Heart right ventricle (tissue), 16 donors: ENCODE measurements at regions of chr3 and their contacts with region 1.

Region 1: DNA sequence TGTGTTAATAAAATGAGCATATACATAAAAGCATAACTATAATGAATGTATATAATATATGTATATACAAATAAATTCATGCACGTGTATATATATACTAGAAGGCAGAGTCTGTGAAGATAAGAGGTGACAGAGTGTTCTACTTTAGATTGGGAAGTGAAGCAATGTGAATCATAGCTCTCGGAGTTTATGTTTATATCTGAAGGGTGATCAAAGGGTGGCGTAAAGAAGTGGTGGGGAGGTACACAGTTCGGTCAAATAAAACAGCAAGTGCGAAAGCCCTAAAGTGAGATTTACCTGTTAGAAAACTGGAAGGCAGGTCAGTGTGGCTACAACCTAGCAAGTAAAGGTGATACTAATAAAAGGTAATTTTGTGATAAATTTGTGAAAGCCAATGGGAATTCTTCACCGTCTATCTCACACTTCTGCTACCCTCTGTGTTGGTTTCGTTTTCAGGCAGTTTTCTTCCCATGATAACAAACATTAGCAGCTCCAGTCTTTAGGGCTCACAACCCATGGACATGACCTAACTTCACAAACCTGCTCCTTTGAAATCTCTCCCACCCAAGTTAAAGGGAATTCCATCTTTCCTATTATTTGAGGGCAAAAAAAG is 46.7 kb upstream of the BCHE start:
- DNase-seq: no peak
- ATAC-seq: no peak
- H3K4me3 ChIP-seq: no peak overlapping the region
- H3K27ac ChIP-seq: no peak overlapping the region
- H3K4me1 ChIP-seq: no peaks in the 10 kb centered on the region
- H3K27me3 ChIP-seq: no peaks in the 10 kb centered on the region
- CTCF ChIP-seq: no peak

Region 2: DNA sequence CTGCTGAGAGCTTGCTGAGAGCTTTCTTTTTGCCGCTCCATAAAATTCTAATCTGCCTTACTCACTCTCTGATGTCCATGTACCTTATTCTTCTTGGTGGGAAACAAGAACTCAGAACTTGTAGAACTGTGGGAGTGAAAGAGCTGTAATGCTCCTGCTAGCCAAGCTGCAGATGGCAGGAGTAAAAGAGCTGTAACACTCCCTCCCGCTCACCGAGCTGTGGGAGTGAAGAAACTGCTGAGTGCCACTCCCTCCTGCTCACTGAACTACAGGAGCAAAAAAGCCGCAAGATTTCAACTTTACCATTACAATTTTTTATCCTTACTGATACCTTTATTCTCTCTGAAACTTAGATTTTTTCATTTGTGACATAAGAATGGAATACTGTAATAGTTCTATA is 1004.8 kb before region 1 on chr3:
- intact Hi-C with region 1: loop called in 1 of 10 experiments (anchors 10 kb)
- DNase-seq: no peak
- ATAC-seq: no peak
- H3K4me3 ChIP-seq: no peak overlapping the region
- H3K27ac ChIP-seq: no peak overlapping the region
- H3K4me1 ChIP-seq: no peaks in the 10 kb centered on the region
- H3K27me3 ChIP-seq: no peaks in the 10 kb centered on the region
- CTCF ChIP-seq: no peak

Region 3: DNA sequence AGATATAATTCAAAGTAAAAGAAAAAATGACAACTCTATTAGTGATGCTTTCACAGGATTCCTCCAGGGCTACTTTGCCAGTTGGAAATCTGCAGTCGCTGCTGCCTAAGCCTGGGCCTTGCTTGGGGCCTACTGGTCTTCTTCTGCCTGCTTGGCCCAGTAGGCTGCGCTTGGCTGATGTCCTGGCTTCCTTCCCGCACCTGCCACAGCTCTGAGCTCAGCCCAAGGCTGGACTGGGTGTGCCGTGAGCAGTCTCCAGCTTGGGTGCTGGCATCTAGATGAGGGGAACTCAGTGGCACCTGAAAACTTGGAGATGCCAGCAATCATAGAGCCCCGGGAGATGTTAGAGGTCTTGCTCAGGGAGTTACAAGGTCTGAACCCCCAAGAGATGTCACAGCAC is 155.0 kb before region 1 on chr3:
- intact Hi-C with region 1: no loop called
- DNase-seq: no peak
- ATAC-seq: no peak
- H3K4me3 ChIP-seq: no peak overlapping the region
- H3K27ac ChIP-seq: no peak overlapping the region
- H3K4me1 ChIP-seq: no peaks in the 10 kb centered on the region
- H3K27me3 ChIP-seq: no peaks in the 10 kb centered on the region
- CTCF ChIP-seq: no peak